Kidney (tissue), 22 donors: ENCODE measurements at regions of chr10 and their contacts with region 1.

Region 1: GRCh38 chr10:43082746-43083145 is 5.9 kb downstream of the RET start:
- DNase-seq: no peak
- H3K4me3 ChIP-seq: no peak overlapping the region
- H3K27ac ChIP-seq: no peak overlapping the region
- H3K4me1 ChIP-seq: no peaks in the 10 kb centered on the region
- H3K27me3 ChIP-seq: peaks cover 7% of the 10 kb centered on the region
- CTCF ChIP-seq: no peak

Region 2: DNA sequence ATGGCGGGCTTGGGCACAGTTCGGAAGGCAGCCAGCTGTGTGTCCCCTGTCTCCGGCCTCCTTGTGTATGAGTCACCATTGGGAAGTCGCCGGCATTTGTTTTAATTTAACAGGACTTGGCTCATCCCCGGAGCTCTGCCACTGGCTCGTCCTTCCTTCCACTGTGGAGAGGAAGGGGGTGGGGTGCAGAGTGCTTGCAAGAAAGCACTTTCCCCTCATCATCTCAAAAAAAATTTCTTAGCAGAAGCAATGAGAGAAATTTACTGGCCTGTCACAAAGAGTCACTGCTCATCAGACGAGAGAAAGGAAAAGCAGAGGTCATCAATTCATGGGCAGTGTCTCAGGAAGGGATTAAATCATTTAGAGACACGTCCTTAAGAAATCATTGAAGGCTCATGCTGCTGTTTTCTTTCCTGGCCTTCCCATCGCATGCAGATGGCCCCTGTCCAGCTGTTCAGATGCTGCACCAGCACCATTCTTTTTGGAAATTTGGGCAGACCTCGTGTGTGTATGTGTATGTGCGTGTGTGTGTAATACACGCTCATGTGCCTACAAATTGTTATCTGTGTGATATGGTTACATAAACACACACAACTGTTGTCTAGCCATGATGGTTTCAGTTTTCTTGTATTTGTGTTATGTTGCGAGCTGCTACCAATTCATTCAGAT is 206.8 kb before region 1 on chr10:
- intact Hi-C with region 1: loop called (anchors 10 kb)
- DNase-seq: peak in 4 of 5 donors; percentile 42 to 85 (median 57)
- H3K4me3 ChIP-seq: no peak overlapping the region
- H3K27ac ChIP-seq: no peak overlapping the region
- H3K4me1 ChIP-seq: peaks cover 0 to 10% (median 0%) of the 10 kb centered on the region in 3 donors
- H3K27me3 ChIP-seq: no peaks in the 10 kb centered on the region
- CTCF ChIP-seq: no peak

Region 3: DNA sequence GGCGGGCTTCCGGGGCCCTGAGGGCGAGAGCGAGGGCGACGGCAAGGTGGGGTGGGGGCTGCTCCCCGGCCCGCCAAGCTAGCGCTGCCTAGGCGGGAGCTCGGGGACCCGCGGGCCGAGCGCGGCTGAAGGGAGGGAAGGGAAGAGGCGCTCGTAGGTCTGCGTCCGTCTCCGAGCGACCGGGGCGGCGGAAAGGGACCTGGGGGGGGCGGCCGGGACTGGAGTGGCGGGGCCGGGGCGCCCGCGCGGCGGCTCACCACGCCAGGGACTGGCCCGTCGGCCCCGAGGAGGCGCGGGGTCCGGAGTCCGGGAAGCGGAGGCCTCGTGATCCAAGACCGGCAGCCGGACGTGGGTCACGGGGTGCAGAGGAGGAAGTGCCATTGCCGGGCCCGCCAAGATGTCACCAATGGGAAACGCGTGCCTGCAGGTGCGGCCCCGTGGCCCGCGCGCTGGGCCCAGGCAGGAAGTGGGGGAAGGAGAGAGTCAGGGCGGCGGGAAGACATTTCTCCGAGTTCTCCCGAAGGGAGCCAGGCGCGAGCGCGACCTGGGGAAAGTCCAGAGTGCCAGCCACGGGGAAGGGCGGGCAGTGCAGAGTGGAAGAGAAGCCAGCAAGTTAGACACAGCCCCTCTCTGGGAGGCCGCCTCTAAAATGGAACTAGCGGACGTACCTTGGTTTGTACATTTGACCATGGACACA is 314.3 kb after region 1 on chr10:
- intact Hi-C with region 1: no loop called
- DNase-seq: peak; percentile 91 to 97 (median 93)
- H3K4me3 ChIP-seq: peak overlapping the region; percentile 51 to 86 (median 67)
- H3K27ac ChIP-seq: peak overlapping the region; percentile 97
- H3K4me1 ChIP-seq: peaks cover 0 to 30% (median 13%) of the 10 kb centered on the region in 3 donors
- H3K27me3 ChIP-seq: no peaks in the 10 kb centered on the region
- CTCF ChIP-seq: no peak

Region 4: GRCh38 chr10:43808136-43808535 is 725.4 kb after region 1 on chr10:
- intact Hi-C with region 1: no loop called
- DNase-seq: no peak
- H3K4me3 ChIP-seq: no peak overlapping the region
- H3K27ac ChIP-seq: no peak overlapping the region
- H3K4me1 ChIP-seq: peaks cover 0 to 4% (median 0%) of the 10 kb centered on the region in 3 donors
- H3K27me3 ChIP-seq: no peaks in the 10 kb centered on the region
- CTCF ChIP-seq: no peak